ENCODE measurements at regions of chr3 and their contacts with region 1.

Region 1: GRCh38 chr3:113136071-113136470 is 75.3 kb upstream of the BOC start:
- DNase-seq: no peak
- H3K4me3 ChIP-seq: no peak overlapping the region
- H3K27ac ChIP-seq: no peak overlapping the region
- H3K4me1 ChIP-seq: peaks cover 1% of the 10 kb centered on the region
- H3K27me3 ChIP-seq: no peaks in the 10 kb centered on the region
- CTCF ChIP-seq: peak; percentile 62 to 80 (median 69)
- EP300 ChIP-seq: no peak
- POLR2A ChIP-seq: no peak

Region 2: DNA sequence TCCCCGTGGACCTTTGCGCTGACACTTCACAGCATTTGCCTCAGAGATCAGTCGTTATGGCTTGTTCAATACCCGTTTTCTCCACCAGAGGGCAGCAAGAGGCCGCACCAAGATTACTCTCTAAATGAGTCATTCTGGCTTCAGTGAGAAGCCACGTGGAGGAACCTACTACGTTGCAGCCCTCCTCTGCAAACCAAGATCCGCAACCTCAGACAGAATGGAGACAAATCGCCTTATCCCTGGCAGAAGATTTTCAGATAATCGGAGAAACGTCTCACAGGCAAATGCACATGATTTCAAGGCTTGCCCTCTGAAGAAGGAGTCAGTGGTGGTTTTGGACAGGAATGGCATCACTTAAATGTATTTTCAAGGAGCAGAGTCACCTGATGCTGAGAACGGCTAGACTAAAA is 84.8 kb before region 1 on chr3:
- intact Hi-C with region 1: loop called in 1 of 4 experiments (anchors 10 kb)
- DNase-seq: peak; percentile 78 to 92 (median 86)
- H3K4me3 ChIP-seq: peak overlapping the region; percentile 11
- H3K27ac ChIP-seq: peak overlapping the region in 1 of 2 donors; percentile 31
- H3K4me1 ChIP-seq: peaks cover 4% of the 10 kb centered on the region
- H3K27me3 ChIP-seq: no peaks in the 10 kb centered on the region
- CTCF ChIP-seq: peak; percentile 55 to 99 (median 96)
- EP300 ChIP-seq: no peak
- POLR2A ChIP-seq: no peak

Region 3: DNA sequence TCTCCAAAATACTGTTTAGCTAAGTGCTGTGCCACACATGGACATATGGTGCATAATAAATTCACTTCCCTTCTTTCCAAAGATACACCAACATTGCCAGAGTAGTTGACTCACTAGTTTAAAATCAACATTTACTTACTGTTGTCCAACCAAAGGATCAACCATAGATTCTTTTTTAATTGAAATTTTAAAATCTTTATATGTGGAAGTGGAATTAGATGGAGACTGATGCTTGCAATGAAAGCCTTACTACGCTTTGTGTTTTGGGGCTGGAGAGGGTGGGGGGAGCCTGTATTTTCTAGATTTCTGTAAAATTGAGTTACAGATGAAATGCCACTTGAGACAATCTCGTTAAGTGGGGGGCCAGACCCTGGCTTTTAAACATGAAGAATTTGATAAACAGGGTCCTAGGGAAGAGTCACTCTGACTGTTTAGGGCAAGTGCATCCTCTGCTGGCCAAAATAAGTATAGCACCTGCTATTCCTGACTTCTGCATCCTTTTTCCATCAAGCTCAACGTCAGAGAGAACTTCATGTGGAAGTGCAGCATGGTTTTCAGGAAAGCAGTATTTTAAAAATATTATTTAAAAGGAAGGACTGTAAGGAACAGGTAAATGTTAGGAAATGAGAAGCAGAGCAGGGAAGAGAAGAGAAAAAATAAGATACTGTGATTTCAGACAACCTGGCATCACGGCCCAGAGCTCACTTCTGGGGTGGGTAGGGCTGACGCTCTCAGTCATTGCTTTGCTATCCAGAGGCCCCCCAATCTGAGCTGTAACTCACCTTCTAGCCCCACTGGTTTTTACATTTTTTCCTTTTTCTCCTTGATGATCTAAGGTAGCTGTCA is 152.0 kb after region 1 on chr3:
- intact Hi-C with region 1: loop called (anchors 1 to 5 kb)
- DNase-seq: peak in 4 of 5 donors; percentile 56 to 79 (median 66)
- H3K4me3 ChIP-seq: no peak overlapping the region
- H3K27ac ChIP-seq: peak overlapping the region in 1 of 2 donors; percentile 51
- H3K4me1 ChIP-seq: peaks cover 19% of the 10 kb centered on the region
- H3K27me3 ChIP-seq: no peaks in the 10 kb centered on the region
- CTCF ChIP-seq: peak; percentile 80 to 99 (median 98)
- EP300 ChIP-seq: no peak
- POLR2A ChIP-seq: no peak

Region 4: GRCh38 chr3:113501597-113501996 is 365.5 kb after region 1 on chr3:
- intact Hi-C with region 1: no loop called
- DNase-seq: no peak
- H3K4me3 ChIP-seq: no peak overlapping the region
- H3K27ac ChIP-seq: no peak overlapping the region
- H3K4me1 ChIP-seq: no peaks in the 10 kb centered on the region
- H3K27me3 ChIP-seq: no peaks in the 10 kb centered on the region
- CTCF ChIP-seq: no peak
- EP300 ChIP-seq: no peak
- POLR2A ChIP-seq: no peak